ENCODE measurements at regions of chr4 and their contacts with region 1.

Region 1: DNA sequence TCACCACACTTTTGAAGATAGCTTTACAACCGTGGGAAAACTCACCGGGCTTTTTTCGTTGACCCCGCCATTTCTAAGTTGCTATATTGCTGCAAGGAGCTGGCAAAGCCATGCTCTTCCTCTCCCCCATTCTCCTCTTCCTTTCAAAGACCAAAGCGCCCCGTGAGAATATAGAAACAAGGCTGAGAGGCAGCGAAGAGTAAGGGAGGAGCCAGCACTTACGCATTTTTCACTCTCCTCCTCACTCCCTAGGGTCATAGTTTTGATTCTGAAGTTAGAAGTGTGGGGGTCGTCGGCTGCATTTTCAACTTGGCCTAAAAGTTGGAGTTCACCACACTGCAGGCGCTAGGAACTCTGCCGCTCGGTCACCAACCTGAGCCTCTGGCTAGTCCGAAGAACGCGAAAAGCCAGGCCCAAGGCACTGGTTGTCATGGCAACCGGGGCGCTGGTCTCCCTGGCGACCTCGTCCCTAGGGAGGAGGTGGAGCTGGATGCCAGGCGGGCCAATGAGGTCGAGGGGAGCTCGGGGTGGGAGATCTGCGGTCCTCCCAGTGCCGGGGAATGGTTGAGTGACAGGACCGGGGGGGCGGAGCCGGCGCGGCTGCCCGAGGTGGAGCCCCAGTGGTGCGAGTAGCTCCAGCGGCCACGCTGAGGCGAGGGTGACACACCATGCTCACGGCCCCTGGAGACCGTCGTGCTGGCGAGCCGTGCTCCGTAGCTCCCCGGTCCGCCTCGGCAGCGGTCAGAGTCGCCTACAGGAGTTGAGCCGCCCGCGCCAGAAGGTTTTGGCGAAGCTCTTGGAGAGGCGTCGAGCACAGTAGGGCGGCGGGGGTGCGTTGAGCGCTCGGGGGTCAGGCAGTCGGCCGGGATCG is at the start of gene PTPN13:
- DNase-seq: peak; percentile 97 to 99
- ATAC-seq: peak; percentile 99
- H3K4me3 ChIP-seq: peak within 1 kb of the TSS; percentile 53 to 89
- H3K27ac ChIP-seq: peak within 1 kb of the TSS in 1 of 2 donors; percentile 62
- H3K4me1 ChIP-seq: peaks cover 0 to 3% of the 10 kb centered on the region in 2 donors
- H3K27me3 ChIP-seq: no peaks in the 10 kb centered on the region
- total RNA-seq, gene PTPN13: 12.7 to 30.1 TPM

Region 2: DNA sequence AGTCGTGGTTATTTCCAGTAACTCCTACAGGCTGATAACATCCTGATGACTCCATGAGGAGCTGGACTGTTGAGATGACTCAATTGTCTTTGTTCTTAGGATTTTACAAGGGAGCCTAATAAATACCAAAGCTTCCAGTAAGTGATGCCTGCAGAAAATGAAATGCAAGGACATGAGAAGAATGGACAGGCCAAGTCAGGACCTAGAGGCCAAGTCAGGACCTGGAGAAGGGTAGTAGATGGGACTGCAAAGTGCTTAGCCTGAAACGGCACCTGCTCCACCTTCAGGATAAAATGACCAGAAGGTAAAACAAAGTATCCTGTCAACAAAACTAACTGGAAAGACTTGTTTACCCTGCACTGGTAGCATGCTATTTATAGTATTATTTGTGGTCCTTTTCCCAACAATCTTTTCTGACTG is 261.7 kb after region 1 on chr4:
- intact Hi-C with region 1: no loop called
- DNase-seq: no peak
- ATAC-seq: no peak
- H3K4me3 ChIP-seq: no peak overlapping the region
- H3K27ac ChIP-seq: no peak overlapping the region
- H3K4me1 ChIP-seq: no peaks in the 10 kb centered on the region
- H3K27me3 ChIP-seq: no peaks in the 10 kb centered on the region

Region 3: DNA sequence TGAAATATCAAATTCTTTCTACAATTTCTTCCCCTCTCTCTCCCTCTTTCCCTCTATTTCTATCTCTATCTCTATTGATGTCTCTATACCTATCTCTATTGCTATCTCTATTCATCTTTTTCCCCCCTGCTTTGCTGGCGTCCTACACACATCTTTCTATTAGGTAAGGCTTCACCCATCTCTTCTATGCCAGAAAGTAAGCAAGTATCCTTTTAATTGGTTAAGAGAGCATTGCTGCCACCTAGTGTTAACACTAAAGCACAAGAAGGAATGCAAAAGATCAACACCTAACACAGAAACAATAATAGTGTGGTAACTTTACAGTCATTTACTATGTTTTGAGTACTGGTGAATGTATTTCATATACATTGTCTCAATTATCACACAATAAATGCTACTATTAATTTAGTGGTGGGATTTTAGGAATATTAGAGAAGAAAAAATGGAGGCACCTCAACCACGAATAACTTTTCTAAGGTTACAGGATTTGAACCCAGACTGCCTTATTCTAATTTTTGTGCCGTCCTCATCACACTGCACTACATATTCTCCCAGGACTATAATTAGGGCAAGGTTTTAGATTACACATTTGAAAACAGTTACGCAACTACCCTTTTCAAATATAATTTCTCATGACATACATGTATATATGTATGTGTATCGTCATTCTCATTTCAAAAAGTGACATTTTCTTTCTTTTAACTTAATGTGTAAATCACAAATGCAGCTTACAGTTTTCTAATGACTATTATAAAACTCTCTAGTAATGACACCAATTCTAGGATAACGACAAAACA is 302.0 kb after region 1 on chr4:
- intact Hi-C with region 1: loop called (anchors 5 to 10 kb)
- DNase-seq: no peak
- ATAC-seq: peak; percentile 73
- H3K4me3 ChIP-seq: no peak overlapping the region
- H3K27ac ChIP-seq: no peak overlapping the region
- H3K4me1 ChIP-seq: no peaks in the 10 kb centered on the region
- H3K27me3 ChIP-seq: no peaks in the 10 kb centered on the region

Measured in aorta (tissue), 5 donors.